GM12878 (cell line): ENCODE measurements at regions of chr12 and their contacts with region 1.

Region 1: GRCh38 chr12:101773650-101774162 is 34.4 kb upstream of the SYCP3 start:
- DNase-seq: peak; percentile 41
- ATAC-seq: peak; percentile 91
- H3K4me3 ChIP-seq: no peak overlapping the region
- H3K27ac ChIP-seq: no peak overlapping the region
- H3K4me1 ChIP-seq: no peaks in the 10 kb centered on the region
- H3K27me3 ChIP-seq: no peaks in the 10 kb centered on the region
- CTCF ChIP-seq: peak; percentile 80 to 93 (median 91)
- EP300 ChIP-seq: no peak
- POLR2A ChIP-seq: no peak
- RAD21 ChIP-seq: peak; percentile 96

Region 2: DNA sequence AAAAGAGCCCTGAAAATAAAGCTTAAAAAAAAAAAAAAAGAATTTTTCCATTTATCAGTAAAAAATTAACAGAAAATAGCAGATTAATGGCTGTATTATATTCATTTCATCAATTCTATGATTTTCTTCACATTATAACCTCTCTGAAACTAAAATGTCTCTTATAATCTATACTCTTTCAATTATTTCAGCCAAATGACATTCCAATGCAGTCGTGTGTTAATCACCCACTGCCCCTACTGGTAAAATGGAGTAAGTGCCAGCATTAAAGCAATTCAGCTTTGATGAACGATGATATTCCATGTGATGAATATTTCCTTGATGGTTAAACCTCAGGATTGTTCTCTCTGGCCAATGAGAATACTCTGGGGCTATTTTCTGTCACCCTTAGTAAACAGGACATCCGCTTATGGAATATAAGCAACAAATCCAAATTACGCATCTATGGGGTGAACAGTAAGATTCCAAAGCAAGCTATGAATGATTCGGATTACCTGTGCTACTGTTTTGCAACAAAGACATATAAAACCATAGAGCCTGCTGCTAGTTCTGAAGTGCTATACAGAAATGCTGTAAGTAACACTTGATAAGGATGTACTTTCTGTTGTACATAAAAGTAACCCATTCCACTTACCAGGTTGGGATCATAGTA is 14.2 kb before region 1 on chr12:
- CTCF ChIA-PET with region 1: interaction called, 34 read pairs
- POLR2A ChIA-PET with region 1: no interaction called
- RAD21 ChIA-PET with region 1: interaction called, 6 read pairs
- SMC1A ChIA-PET with region 1: interaction called, 3 read pairs
- in situ Hi-C with region 1: no loop called
- intact Hi-C with region 1: no loop called
- DNase-seq: no peak
- ATAC-seq: peak; percentile 80
- H3K4me3 ChIP-seq: no peak overlapping the region
- H3K27ac ChIP-seq: no peak overlapping the region
- H3K4me1 ChIP-seq: no peaks in the 10 kb centered on the region
- H3K27me3 ChIP-seq: no peaks in the 10 kb centered on the region
- CTCF ChIP-seq: peak; percentile 68 to 83 (median 76)
- EP300 ChIP-seq: no peak
- POLR2A ChIP-seq: no peak
- RAD21 ChIP-seq: peak; percentile 87

Region 3: DNA sequence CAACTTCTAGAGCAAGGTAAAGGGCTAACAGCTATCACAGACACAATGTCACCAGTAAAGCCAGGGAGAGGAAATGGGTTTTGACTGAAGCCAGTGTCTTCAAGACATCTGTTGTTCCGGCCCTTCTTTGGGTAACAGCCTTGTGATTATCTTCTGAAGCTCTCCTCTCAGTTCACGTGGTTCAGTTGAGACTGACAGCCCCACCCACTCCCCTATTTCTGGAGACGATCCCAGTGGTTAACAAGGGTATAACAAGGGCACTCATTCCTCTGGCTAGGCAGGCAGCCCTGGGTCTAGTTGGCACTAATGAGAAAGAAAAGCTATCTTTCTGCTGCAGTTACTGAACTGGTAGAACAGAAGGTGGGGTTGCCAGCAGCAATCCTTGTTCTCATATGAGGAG is 50.2 kb after region 1 on chr12:
- CTCF ChIA-PET with region 1: interaction called, 128 read pairs
- POLR2A ChIA-PET with region 1: interaction called, 8 read pairs
- RAD21 ChIA-PET with region 1: interaction called, 142 read pairs
- SMC1A ChIA-PET with region 1: interaction called, 123 read pairs
- in situ Hi-C with region 1: no loop called
- intact Hi-C with region 1: no loop called
- DNase-seq: no peak
- ATAC-seq: peak; percentile 81
- H3K4me3 ChIP-seq: no peak overlapping the region
- H3K27ac ChIP-seq: peak overlapping the region; percentile 28; the same call in 1 of the 2 replicates
- H3K4me1 ChIP-seq: peaks cover 17% of the 10 kb centered on the region
- H3K27me3 ChIP-seq: no peaks in the 10 kb centered on the region
- CTCF ChIP-seq: peak; percentile 11 to 47 (median 39); a peak in 4 of 6 replicates
- EP300 ChIP-seq: no peak
- POLR2A ChIP-seq: no peak
- RAD21 ChIP-seq: no peak

Region 4: DNA sequence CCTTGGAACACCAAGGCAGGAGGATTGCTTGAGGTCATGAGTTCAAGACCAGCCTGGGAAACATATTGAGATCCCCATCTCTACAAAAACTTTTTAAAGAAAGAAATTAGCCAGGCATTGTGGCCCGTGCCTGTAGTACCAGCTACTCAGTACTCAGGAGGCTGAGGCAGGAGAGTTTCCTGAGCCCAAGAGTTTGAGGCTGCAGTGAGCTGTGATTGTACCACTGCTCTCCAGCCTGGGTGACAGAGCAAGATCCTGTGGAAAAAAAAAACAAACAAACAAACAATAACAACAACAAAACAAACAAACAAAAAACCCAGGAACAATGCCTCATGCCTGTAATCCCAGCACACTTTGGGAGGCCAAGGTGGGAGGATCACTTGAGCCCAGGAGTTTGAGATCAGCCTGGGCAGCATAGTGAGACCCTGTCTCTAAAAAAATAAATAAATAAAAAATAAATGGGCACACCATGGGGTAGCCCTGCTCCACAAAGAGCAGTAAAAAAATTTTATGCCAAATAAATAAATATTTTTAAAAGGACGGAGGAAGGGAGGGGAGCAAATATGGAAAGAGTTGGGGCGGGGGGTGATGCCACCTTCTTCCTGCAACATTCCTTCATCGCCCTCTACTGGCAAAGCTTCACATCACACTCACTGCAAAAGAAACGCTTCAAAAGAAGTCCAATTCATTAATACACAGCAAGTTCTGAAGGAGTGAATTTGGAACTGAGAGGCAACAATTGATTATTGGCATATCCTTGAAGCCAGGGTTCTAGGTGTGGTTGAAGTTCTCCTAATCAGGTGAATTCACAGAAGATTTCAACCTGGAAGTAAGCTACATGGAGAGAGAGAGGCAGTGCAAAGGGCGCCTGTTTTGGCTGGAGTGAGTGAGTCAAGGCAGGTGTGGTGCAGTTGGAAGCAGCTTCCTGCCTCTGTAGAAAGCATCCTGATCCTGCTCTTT is 65.9 kb after region 1 on chr12:
- CTCF ChIA-PET with region 1: interaction called, 179 read pairs
- POLR2A ChIA-PET with region 1: interaction called, 3 read pairs
- RAD21 ChIA-PET with region 1: interaction called, 59 read pairs
- SMC1A ChIA-PET with region 1: interaction called, 83 read pairs
- in situ Hi-C with region 1: loop called (anchors 10 kb)
- intact Hi-C with region 1: loop called (anchors 1 kb)
- DNase-seq: no peak
- ATAC-seq: peak; percentile 84
- H3K4me3 ChIP-seq: no peak overlapping the region
- H3K27ac ChIP-seq: peak overlapping the region; percentile 54
- H3K4me1 ChIP-seq: peaks cover 15% of the 10 kb centered on the region
- H3K27me3 ChIP-seq: no peaks in the 10 kb centered on the region
- CTCF ChIP-seq: peak; percentile 76 to 86 (median 80)
- EP300 ChIP-seq: no peak
- POLR2A ChIP-seq: no peak
- RAD21 ChIP-seq: peak; percentile 78

Region 5: GRCh38 chr12:101919447-101919846 is 145.7 kb after region 1 on chr12:
- CTCF ChIA-PET with region 1: interaction called, 7 read pairs
- POLR2A ChIA-PET with region 1: no interaction called
- RAD21 ChIA-PET with region 1: interaction called, 10 read pairs
- SMC1A ChIA-PET with region 1: interaction called, 6 read pairs
- in situ Hi-C with region 1: no loop called
- intact Hi-C with region 1: loop called (anchors 1 kb)
- DNase-seq: no peak
- ATAC-seq: no peak
- H3K4me3 ChIP-seq: no peak overlapping the region
- H3K27ac ChIP-seq: no peak overlapping the region
- H3K4me1 ChIP-seq: peaks cover 26% of the 10 kb centered on the region
- H3K27me3 ChIP-seq: no peaks in the 10 kb centered on the region
- CTCF ChIP-seq: no peak
- EP300 ChIP-seq: no peak
- POLR2A ChIP-seq: no peak
- RAD21 ChIP-seq: no peak

Region 6: GRCh38 chr12:102061560-102062418 is 288.1 kb after region 1 on chr12 and contains the start of gene WASHC3:
- CTCF ChIA-PET with region 1: no interaction called
- POLR2A ChIA-PET with region 1: no interaction called
- RAD21 ChIA-PET with region 1: no interaction called
- SMC1A ChIA-PET with region 1: no interaction called
- in situ Hi-C with region 1: no loop called
- intact Hi-C with region 1: loop called (anchors 10 kb)
- DNase-seq: peak; percentile 74
- ATAC-seq: peak; percentile 95
- H3K4me3 ChIP-seq: peak within 1 kb of the TSS; percentile 73
- H3K27ac ChIP-seq: peak within 1 kb of the TSS; percentile 96
- H3K4me1 ChIP-seq: peaks cover 10% of the 10 kb centered on the region; the same call in 1 of the 2 replicates
- H3K27me3 ChIP-seq: no peaks in the 10 kb centered on the region
- CTCF ChIP-seq: no peak
- EP300 ChIP-seq: no peak
- POLR2A ChIP-seq: peak; percentile 76
- RAD21 ChIP-seq: no peak
- polyA plus RNA-seq, gene WASHC3: 87.0 to 106 TPM

Region 7: DNA sequence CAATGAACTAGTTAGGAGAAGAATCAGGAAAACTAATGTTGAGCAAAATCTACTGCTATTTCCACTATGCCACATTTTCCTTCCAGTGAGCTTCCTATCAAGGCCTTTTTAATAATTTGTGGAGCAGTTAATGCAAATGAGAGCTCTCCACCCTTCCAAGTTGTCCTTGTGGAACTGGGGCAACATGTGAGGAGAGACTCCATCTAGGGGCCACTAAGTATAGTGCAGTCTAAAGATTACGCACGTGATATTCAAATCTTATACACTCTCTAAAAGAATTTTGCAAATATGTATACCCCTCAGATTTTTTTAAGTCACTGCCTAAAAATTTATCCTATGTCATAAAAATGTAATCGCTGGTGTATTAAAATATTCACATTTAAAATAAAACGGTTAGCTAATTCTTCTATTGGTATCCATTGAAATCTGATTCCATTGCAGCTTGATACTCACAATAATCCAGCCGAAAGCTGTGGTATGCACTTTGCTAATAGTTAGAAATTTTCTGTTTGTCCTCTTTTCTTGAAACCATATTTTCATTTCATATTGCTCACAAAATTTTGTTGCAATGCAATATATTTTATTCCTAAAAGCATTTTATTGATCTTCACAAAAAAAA is 1043.2 kb after region 1 on chr12:
- CTCF ChIA-PET with region 1: interaction called, 11 read pairs
- POLR2A ChIA-PET with region 1: no interaction called
- RAD21 ChIA-PET with region 1: interaction called, 8 read pairs
- SMC1A ChIA-PET with region 1: interaction called, 3 read pairs
- in situ Hi-C with region 1: no loop called
- intact Hi-C with region 1: loop called (anchors 10 kb)
- DNase-seq: no peak
- ATAC-seq: peak; percentile 76
- H3K4me3 ChIP-seq: no peak overlapping the region
- H3K27ac ChIP-seq: no peak overlapping the region
- H3K4me1 ChIP-seq: no peaks in the 10 kb centered on the region
- H3K27me3 ChIP-seq: no peaks in the 10 kb centered on the region; a peak in 1 of 4 replicates
- CTCF ChIP-seq: peak; percentile 53 to 61 (median 60)
- EP300 ChIP-seq: no peak
- POLR2A ChIP-seq: no peak
- RAD21 ChIP-seq: peak; percentile 49